Activated CD4-positive, alpha-beta memory T cell treated with anti-CD3 and anti-CD28 coated beads for 36 hours (primary cell): ENCODE measurements at regions of chr5 and their contacts with region 1.

Region 1: DNA sequence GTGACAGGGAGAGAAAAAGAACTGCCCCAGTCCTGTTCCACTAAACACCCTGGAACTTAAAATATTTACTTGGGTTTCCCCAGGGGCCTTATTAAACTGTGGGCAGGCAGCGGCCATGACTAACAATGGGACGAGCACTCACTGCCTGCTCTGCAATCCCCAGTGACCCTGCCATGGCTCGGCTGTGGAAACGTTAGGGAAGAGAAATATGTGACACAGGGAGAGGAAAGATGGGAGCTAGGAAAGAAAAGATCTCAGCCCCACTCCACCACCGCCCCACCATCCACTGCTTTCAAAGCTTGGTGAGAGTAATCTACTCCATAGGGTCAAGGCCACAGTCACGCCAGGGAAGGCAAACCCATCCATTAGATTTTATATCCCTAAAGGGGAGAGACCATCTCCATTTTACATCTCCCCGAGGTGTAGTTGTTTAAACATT is 117.6 kb downstream of the EFNA5 start:
- DNase-seq: no peak
- H3K4me3 Mint-ChIP-seq: no peak overlapping the region
- H3K27ac Mint-ChIP-seq: no peak overlapping the region
- H3K4me1 Mint-ChIP-seq: no peaks in the 10 kb centered on the region
- H3K27me3 Mint-ChIP-seq: peaks cover 7% of the 10 kb centered on the region

Region 2: DNA sequence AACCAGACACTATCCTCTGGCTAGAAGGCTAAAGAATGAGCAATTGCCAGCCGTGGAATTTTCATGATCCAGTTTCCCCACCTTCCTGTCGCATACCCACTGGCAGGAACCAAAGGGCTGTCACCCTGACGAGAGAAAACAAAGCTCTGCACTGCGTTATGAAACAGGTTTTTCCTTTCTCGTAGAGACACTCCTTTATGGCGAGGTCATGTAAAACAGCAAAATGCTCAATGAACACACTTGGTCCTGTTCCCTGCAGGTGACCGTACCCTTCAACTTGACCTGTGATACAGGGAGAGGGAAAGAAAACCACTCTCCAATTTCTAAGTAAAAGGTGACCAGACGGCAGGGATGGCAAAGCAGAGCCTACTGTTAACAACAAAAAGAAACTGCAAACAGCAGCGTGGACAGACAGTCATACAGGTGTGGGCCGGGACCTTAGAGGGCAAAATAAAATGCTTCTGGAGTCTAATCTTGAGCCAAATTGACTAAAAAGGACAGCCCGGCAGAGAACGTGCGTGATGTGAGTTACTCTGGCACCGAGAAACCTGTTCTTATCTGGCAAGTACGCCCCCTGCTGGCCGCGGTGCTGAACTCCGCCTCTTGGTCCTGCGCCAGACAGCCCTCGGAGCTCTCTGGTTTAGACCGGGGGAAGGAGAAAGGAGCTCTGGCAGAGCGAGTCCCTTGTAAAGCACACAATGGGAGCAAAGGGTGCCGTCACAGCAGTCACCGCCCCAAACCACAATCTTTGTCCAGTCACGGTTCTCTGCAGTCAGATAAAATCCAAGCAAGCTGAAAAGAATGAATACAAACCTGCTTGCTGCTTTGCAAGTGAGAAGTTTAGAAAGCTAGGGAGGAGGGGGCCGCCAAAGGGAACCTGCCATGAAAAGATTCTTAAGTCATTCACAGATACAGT is 18.7 kb after region 1 on chr5:
- CTCF ChIA-PET with region 1: interaction called, 14 read pairs
- POLR2A ChIA-PET with region 1: interaction called, 3 read pairs
- intact Hi-C with region 1: no loop called
- DNase-seq: peak; percentile 91
- H3K4me3 Mint-ChIP-seq: peak overlapping the region; percentile 71
- H3K27ac Mint-ChIP-seq: no peak overlapping the region
- H3K4me1 Mint-ChIP-seq: peaks cover 16% of the 10 kb centered on the region
- H3K27me3 Mint-ChIP-seq: peaks cover 17% of the 10 kb centered on the region

Region 3: GRCh38 chr5:107619782-107620181 is 66.6 kb after region 1 on chr5:
- CTCF ChIA-PET with region 1: no interaction called
- POLR2A ChIA-PET with region 1: no interaction called
- intact Hi-C with region 1: no loop called
- DNase-seq: no peak
- H3K4me3 Mint-ChIP-seq: no peak overlapping the region
- H3K27ac Mint-ChIP-seq: no peak overlapping the region
- H3K4me1 Mint-ChIP-seq: no peaks in the 10 kb centered on the region
- H3K27me3 Mint-ChIP-seq: no peaks in the 10 kb centered on the region